Endothelial cell of umbilical vein (primary cell): ENCODE measurements at regions of chr4 and their contacts with region 1.

Region 1: GRCh38 chr4:144709793-144710525 is 64.0 kb downstream of the HHIP start:
- DNase-seq: peak; percentile 89
- H3K4me3 ChIP-seq: no peak overlapping the region
- H3K27ac ChIP-seq: peak overlapping the region; percentile 91
- H3K4me1 ChIP-seq: peaks cover 66% of the 10 kb centered on the region
- H3K27me3 ChIP-seq: no peaks in the 10 kb centered on the region
- CTCF ChIP-seq: no peak
- POLR2A ChIP-seq: peak; percentile 41

Region 2: DNA sequence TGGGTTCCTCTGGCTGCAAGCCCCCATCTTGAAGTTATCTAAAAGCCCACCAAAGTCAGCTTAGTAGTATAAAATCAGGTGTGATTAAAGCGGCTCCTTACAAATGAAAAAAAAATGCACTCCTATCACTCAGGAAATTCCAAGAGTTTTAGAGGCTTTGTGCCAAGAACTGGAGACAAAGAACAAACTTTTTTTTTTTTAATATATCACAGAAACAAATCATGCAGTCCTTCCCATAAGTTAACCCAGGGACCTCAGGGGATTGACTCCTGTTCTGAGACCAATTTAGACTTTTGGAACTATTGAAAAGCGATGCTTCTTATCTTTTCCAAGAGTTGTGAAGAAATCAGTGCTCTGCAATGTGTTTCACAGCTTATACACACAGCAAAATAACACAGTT is 10.4 kb before region 1 on chr4:
- CTCF ChIA-PET with region 1: interaction called, 5 read pairs
- POLR2A ChIA-PET with region 1: interaction called, 5 read pairs
- dilution Hi-C with region 1: no loop called
- intact Hi-C with region 1: loop called (anchors 1 kb)
- DNase-seq: peak; percentile 90
- H3K4me3 ChIP-seq: peak overlapping the region in 1 of 3 experiments; percentile 44
- H3K27ac ChIP-seq: peak overlapping the region; percentile 94
- H3K4me1 ChIP-seq: peaks cover 82% of the 10 kb centered on the region
- H3K27me3 ChIP-seq: no peaks in the 10 kb centered on the region
- CTCF ChIP-seq: no peak
- POLR2A ChIP-seq: peak; percentile 74